ENCODE measurements at regions of chr15 and their contacts with region 1.

Region 1: DNA sequence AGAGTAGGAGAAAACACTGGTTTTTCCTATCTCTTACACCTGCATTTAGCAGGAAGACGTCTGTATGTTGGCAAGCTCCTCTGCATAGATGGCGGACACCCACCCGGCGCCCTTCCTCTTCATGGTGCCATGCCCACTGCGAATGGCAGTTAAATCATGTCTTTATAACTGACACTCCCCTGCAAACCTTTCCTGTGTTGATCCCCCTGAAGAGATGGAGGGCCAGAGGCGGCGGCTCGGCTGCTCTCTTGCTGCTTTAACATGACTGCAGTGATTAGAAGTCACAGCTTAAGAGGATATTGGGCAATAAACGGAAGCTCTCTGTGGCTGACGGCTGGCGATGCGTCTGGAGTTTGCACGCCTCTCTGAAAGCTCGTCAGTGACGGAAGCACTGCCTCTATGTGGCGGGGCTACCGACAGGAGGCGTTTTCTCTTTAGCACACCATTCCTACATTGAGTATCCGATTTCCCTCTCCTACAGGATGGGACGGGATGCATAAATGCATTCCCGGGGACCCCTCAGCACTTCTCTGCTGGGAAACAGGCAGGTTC is 25.5 kb upstream of the SNRPA1 start:
- ATAC-seq: peak in 1 of 8 experiments; percentile 88
- H3K4me3 ChIP-seq: no peak overlapping the region
- H3K27ac ChIP-seq: no peak overlapping the region
- H3K4me1 ChIP-seq: peaks cover 0 to 10% of the 10 kb centered on the region in 2 donors

Region 2: DNA sequence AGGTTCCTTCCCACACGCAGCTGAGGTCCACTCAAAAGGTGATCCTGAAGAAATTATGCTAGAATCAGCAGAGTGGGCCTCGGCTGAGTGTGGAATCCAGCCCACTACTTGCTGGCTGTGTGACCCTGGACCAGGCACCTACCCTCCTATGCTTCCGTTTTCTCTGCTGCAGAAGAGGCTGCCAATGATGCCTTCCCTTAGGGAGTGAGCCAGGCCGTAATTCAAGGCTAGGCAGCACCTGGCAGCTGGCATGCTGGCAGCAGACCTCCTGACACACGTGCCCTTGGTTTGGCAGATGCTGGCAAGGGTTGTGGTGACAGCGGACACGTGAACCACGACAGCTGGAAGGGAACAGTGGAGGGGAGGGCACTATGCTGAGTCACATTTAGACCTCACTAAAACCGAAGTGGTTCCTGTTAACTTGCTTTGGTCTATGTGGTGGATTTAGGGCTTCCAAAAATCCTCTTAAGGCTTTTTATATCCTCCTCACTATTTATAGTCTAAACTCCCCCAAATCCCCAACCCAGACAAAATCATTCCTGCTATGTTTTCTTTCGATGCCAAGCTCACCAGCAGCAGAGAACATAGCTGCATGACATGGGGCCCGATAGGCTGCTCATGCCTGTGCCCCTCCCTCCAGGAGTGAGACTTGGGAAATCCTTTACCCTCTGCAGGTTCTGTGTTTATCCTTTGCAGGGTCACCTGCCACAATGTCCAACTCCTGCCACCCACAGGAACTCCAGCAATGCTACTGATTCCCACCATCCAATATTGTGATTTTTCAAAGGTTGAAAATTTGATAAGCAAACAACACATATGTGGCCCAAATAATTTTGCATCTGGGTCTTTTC is 179.5 kb after region 1 on chr15:
- in situ Hi-C with region 1: loop called in 1 of 9 experiments (anchors 25 kb)
- ATAC-seq: no peak
- H3K4me3 ChIP-seq: no peak overlapping the region
- H3K27ac ChIP-seq: no peak overlapping the region
- H3K4me1 ChIP-seq: no peaks in the 10 kb centered on the region